ENCODE measurements at regions of chr12 and their contacts with region 1.

Region 1: GRCh38 chr12:44835641-44836379 is 40.3 kb downstream of the NELL2 start:
- DNase-seq: peak in 5 of 10 donors; percentile 18 to 65 (median 40)
- H3K4me3 ChIP-seq: peak overlapping the region in 1 of 59 donors; percentile 5
- H3K27ac ChIP-seq: peak overlapping the region in 57 of 59 donors; percentile 36 to 90 (median 77)
- H3K27me3 ChIP-seq: no peaks in the 10 kb centered on the region
- CTCF ChIP-seq: no peak

Region 2: DNA sequence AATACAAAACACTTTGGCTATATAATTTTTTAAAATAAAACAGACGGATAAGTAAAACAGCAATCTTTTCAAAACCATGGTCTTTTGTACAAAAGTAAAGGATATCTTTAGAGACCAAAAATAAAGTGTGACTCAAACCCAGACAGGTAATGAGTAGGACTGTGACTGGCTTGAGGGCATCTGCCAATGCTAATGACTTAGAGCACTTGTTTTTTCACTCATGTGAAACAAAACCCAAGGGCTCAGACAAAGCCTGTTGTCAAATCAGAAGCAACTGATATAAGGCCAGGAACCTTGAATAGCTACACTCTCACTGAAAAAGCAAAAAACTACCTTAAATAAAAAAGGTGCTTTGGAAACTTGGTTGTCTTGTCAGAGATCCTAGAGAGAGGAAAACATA is 642.5 kb before region 1 on chr12:
- intact Hi-C with region 1: no loop called
- DNase-seq: no peak
- H3K4me3 ChIP-seq: no peak overlapping the region
- H3K27ac ChIP-seq: no peak overlapping the region
- H3K27me3 ChIP-seq: no peaks in the 10 kb centered on the region
- CTCF ChIP-seq: no peak

Region 3: GRCh38 chr12:44851586-44851985 is 15.8 kb after region 1 on chr12:
- intact Hi-C with region 1: loop called in 1 of 2 experiments (anchors 1 kb)
- DNase-seq: peak in 5 of 10 donors; percentile 30 to 78 (median 52)
- H3K4me3 ChIP-seq: no peak overlapping the region
- H3K27ac ChIP-seq: peak overlapping the region in 32 of 59 donors; percentile 4 to 75 (median 38)
- H3K27me3 ChIP-seq: no peaks in the 10 kb centered on the region
- CTCF ChIP-seq: no peak